SK-N-SH (cell line): ENCODE measurements at regions of chr3 and their contacts with region 1.

Region 1: GRCh38 chr3:27345492-27345891 is 23.7 kb downstream of the NEK10 start:
- DNase-seq: no peak
- H3K4me3 ChIP-seq: no peak overlapping the region
- H3K27ac ChIP-seq: no peak overlapping the region
- H3K4me1 ChIP-seq: no peaks in the 10 kb centered on the region; a peak in 1 of 4 replicates
- H3K27me3 ChIP-seq: no peaks in the 10 kb centered on the region
- CTCF ChIP-seq: no peak
- EP300 ChIP-seq: no peak
- RAD21 ChIP-seq: no peak

Region 2: GRCh38 chr3:27333843-27334242 is 11.6 kb before region 1 on chr3:
- CTCF ChIA-PET with region 1: no interaction called
- POLR2A ChIA-PET with region 1: no interaction called
- DNase-seq: no peak
- H3K4me3 ChIP-seq: no peak overlapping the region
- H3K27ac ChIP-seq: no peak overlapping the region
- H3K4me1 ChIP-seq: no peaks in the 10 kb centered on the region
- H3K27me3 ChIP-seq: no peaks in the 10 kb centered on the region
- CTCF ChIP-seq: no peak
- EP300 ChIP-seq: no peak
- RAD21 ChIP-seq: no peak

Region 3: DNA sequence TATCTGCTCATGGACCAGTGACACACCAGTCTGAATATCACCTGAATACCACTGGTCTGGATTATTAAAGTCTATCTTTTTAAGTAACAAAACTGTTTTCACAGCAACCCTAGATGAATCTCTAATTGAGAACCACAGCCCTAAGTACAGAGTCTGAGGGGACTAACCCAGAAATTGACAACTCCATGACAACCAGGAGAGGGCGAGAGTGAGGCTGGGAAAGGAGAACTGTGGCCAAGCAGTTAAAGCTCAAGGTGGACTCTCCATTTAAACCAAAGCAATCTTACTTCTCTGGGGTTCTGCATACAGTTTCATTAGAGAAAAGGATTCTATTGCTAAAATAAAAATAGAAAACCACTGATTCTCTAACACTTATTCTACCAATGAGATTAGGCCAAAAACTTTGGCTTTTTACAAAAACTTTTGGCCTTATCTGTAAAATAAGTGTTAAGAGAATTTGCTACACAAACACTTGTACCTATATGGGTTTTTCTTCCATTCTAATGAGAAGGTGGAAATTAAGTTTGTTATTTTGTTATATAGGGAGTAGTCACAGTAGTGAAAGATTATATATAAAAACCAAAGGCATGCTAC is 12.3 kb after region 1 on chr3:
- CTCF ChIA-PET with region 1: interaction called, 12 read pairs
- POLR2A ChIA-PET with region 1: no interaction called
- DNase-seq: peak; percentile 39
- H3K4me3 ChIP-seq: no peak overlapping the region; a peak in 1 of 4 replicates
- H3K27ac ChIP-seq: no peak overlapping the region
- H3K4me1 ChIP-seq: no peaks in the 10 kb centered on the region; a peak in 1 of 4 replicates
- H3K27me3 ChIP-seq: no peaks in the 10 kb centered on the region
- CTCF ChIP-seq: peak; percentile 70
- EP300 ChIP-seq: no peak
- RAD21 ChIP-seq: peak; percentile 74